ENCODE measurements at regions of chr21 and their contacts with region 1.

Region 1: GRCh38 chr21:23578027-23578426 is 2029.3 kb downstream of the MRPL39 start:
- DNase-seq: no peak
- H3K4me3 ChIP-seq: no peak overlapping the region
- H3K27ac ChIP-seq: no peak overlapping the region
- H3K4me1 ChIP-seq: no peaks in the 10 kb centered on the region
- CTCF ChIP-seq: no peak

Region 2: DNA sequence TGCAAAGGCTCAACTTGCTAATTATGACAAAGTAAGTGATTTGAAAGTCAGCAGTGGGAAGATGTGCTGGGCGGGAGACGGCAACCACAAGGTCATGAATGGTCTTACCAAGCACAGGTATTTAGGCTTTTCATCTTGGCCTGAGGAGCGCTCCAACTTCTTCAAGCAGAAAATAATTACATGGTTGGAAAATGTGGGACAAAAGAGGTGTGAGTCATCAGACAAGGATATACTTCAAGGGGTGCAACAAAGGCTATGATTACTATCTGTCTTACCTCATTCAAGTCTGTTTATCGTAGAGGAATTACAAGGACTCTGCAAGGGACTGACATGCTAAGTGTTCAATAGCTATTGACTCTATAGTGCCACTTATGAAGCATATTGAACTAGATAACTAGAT is 23.5 kb after region 1 on chr21:
- CTCF ChIA-PET with region 1: no interaction called
- POLR2A ChIA-PET with region 1: interaction called, 3 read pairs
- intact Hi-C with region 1: loop called (anchors 1 kb)
- DNase-seq: no peak
- H3K4me3 ChIP-seq: no peak overlapping the region
- H3K27ac ChIP-seq: no peak overlapping the region
- H3K4me1 ChIP-seq: no peaks in the 10 kb centered on the region
- CTCF ChIP-seq: no peak